ENCODE measurements at regions of chrX and their contacts with region 1.

Region 1: GRCh38 chrX:140141444-140142029 is 176.2 kb upstream of the CXorf66 start:
- DNase-seq: peak; percentile 31
- H3K4me3 Mint-ChIP-seq: no peak overlapping the region
- H3K27ac Mint-ChIP-seq: no peak overlapping the region
- H3K4me1 Mint-ChIP-seq: no peaks in the 10 kb centered on the region
- H3K27me3 Mint-ChIP-seq: peaks cover 1% of the 10 kb centered on the region

Region 2: GRCh38 chrX:140057001-140057411 is 84.5 kb before region 1 on chrX:
- CTCF ChIA-PET with region 1: interaction called, 25 read pairs
- POLR2A ChIA-PET with region 1: no interaction called
- intact Hi-C with region 1: loop called (anchors 1 kb)
- DNase-seq: peak; percentile 63
- H3K4me3 Mint-ChIP-seq: no peak overlapping the region
- H3K27ac Mint-ChIP-seq: no peak overlapping the region
- H3K4me1 Mint-ChIP-seq: no peaks in the 10 kb centered on the region
- H3K27me3 Mint-ChIP-seq: peaks cover 2% of the 10 kb centered on the region

Region 3: GRCh38 chrX:140157611-140158010 is 16.1 kb after region 1 on chrX:
- CTCF ChIA-PET with region 1: no interaction called
- POLR2A ChIA-PET with region 1: no interaction called
- intact Hi-C with region 1: no loop called
- DNase-seq: no peak
- H3K4me3 Mint-ChIP-seq: no peak overlapping the region
- H3K27ac Mint-ChIP-seq: no peak overlapping the region
- H3K4me1 Mint-ChIP-seq: no peaks in the 10 kb centered on the region
- H3K27me3 Mint-ChIP-seq: no peaks in the 10 kb centered on the region

Measured in activated CD4-positive, alpha-beta memory T cell treated with anti-CD3 and anti-CD28 coated beads for 36 hours (primary cell).